ENCODE measurements at regions of chr17 and their contacts with region 1.

Region 1: DNA sequence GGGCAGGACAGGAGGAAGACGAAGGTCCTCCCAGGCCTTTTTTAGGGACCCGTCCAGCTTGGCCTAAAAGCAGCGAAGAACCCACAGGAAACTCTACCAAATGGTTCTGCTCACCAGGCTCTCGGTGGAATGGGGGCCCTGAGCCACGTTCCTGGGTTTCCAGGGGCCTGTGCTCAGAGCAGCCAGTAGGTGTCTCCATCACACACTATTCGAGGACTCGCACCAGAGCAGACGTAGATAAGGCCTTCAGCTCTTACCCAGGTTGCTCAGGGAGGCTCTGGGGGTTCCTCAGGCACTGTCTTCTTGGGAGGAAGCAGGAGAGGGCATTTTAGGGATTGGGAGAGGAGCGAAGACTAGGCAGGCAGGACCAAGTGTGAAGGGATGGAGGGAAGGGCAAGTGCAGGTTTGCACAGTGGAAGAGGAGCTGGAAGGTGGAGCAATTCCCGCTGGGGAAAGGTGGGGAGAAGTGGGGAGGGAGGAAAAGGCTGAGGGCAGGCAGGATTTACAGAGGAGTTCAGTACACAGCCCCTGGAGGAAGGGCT is 157.1 kb downstream of the RGS9 start:
- DNase-seq: peak; percentile 78
- ATAC-seq: peak; percentile 98
- H3K4me3 Mint-ChIP-seq: no peak overlapping the region
- H3K27ac Mint-ChIP-seq: no peak overlapping the region
- H3K4me1 Mint-ChIP-seq: peaks cover 30% of the 10 kb centered on the region
- H3K27me3 Mint-ChIP-seq: peaks cover 8% of the 10 kb centered on the region
- CTCF ChIP-seq: no peak

Region 2: GRCh38 chr17:65231662-65232335 is 62.5 kb before region 1 on chr17:
- CTCF ChIA-PET with region 1: interaction called, 14 read pairs
- POLR2A ChIA-PET with region 1: no interaction called
- DNase-seq: peak; percentile 73
- ATAC-seq: peak; percentile 95
- H3K4me3 Mint-ChIP-seq: no peak overlapping the region
- H3K27ac Mint-ChIP-seq: no peak overlapping the region
- H3K4me1 Mint-ChIP-seq: peaks cover 11% of the 10 kb centered on the region
- H3K27me3 Mint-ChIP-seq: peaks cover 1% of the 10 kb centered on the region; the same call in 1 of the 2 replicates
- CTCF ChIP-seq: peak; percentile 60

Region 3: DNA sequence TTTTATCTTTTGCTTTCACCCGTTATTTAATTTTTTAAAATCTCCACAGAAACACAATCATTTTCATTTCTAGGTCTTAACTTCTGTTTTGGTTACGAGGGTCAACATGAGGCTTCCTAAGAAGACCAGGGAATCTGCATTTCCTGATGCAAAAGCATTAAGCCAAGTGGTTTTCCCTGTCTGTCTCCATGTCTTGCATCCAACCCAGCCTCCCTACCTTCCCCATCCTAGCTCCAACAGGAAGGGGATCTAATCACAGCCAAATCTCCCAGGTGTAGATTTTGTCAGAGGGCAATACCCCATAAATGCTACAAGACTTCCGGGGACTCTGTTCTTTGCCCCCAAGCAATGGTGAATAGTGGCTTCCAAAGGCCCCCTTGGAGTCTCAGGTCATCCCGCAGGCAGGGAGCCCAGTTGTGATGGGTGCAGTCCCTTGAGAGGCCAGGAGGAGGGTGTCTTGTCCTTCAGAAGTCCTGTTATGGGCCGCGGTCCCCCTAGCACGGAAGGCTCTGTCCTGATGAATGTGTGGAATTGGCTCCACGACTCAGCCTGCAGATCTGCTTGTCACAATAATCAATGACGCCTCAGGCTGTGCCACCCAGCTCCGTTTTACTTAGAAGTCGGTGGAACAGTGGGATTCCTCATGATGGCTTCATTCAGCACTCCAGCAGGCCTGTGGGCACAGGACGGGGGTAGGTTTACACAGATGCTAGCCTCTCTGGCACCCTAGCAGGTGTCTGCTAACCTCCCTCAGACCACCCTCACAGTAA is 16.0 kb before region 1 on chr17:
- CTCF ChIA-PET with region 1: interaction called, 13 read pairs
- POLR2A ChIA-PET with region 1: no interaction called
- DNase-seq: peak; percentile 83
- ATAC-seq: peak; percentile 99
- H3K4me3 Mint-ChIP-seq: no peak overlapping the region
- H3K27ac Mint-ChIP-seq: no peak overlapping the region
- H3K4me1 Mint-ChIP-seq: peaks cover 16% of the 10 kb centered on the region
- H3K27me3 Mint-ChIP-seq: no peaks in the 10 kb centered on the region
- CTCF ChIP-seq: peak; percentile 62; the same call in 1 of the 2 replicates

Region 4: DNA sequence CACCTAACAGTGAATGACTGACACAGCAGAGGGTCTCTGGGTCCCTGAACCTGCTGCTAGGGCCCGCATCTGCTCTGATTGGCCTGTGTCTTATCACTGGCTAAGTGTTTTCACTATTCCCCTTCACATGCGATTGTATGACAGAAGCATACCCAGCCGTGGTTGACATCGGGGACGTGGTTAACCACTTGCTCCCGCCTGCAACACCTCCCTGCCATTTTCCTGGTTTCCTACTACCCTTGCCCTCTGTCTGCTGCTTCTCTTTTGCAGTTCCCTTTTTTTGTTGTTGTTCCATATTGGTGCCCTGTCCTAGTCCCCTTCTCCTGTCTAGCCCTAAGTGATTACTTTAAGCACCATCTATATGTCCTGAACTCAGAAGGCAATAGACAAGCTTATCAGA is 20.0 kb after region 1 on chr17:
- CTCF ChIA-PET with region 1: interaction called, 27 read pairs
- POLR2A ChIA-PET with region 1: interaction called, 3 read pairs
- DNase-seq: no peak
- ATAC-seq: no peak
- H3K4me3 Mint-ChIP-seq: no peak overlapping the region
- H3K27ac Mint-ChIP-seq: no peak overlapping the region
- H3K4me1 Mint-ChIP-seq: peaks cover 16% of the 10 kb centered on the region
- H3K27me3 Mint-ChIP-seq: no peaks in the 10 kb centered on the region
- CTCF ChIP-seq: no peak

Region 5: DNA sequence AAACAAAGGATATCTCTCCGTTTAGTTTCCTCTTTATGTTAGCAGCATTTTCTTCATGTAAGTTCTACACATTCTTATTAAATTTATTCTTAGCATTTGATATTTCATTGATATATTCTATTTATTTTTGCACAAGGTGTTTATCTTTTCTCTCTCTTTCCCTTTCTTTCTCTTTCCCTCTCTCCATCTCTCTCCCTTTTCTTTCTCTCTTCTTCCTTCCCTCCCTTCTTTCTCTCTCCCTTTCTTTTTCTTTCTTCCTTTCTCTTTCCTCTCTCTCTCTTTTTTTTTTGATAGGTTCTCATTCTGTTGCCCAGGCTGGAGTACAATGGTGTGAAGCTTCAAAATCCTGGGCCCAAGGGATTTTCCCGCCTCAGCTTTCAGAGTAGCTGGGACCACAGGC is 90.8 kb after region 1 on chr17:
- CTCF ChIA-PET with region 1: no interaction called
- POLR2A ChIA-PET with region 1: no interaction called
- DNase-seq: no peak
- ATAC-seq: no peak
- H3K4me3 Mint-ChIP-seq: no peak overlapping the region
- H3K27ac Mint-ChIP-seq: no peak overlapping the region
- H3K4me1 Mint-ChIP-seq: no peaks in the 10 kb centered on the region; the same call in 1 of the 2 replicates
- H3K27me3 Mint-ChIP-seq: no peaks in the 10 kb centered on the region; the same call in 1 of the 2 replicates
- CTCF ChIP-seq: no peak

Region 6: DNA sequence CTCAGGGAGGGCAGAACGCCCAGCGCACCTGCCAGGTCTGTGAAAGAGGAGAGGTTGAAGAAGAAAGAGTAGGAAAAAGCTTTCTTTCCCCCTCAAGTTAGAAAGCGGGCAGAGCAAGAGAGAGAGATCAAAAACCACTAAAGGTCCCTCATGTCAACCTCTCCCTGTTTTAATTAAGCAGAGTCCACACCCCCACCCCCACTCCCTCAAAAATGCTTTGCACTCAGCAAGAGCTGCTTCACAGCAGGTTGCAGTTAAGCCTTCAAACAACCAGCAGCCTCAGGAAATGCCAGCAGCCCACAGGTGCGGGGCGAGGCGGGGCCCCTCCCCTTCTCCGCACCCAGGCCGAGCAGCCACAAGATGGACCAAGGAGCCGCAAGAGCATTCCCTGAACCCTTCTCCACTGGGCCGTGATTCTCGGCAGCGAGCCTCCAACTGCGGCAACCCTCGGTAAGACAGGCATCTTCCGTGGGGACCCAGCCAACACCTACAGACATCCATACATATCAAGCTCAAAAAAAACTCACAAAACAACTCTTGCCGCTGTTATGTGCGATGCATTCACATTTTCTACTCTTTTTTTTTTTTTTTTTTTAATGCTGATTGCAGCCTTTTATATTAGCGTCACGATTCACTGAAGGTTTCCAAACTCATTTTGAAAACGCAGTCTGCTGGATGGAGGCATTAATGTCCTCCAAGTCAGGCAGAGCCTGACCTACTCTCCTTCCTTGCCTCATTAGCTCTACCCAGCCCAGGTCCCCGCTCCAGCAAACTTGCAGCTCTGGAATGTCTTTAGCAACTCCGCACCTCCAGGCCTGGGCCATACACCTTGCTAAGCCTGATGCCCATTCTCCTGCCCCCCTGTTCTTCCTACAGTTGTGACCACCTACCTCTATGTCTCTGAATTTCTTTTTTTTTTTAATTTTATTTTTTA is 201.1 kb after region 1 on chr17:
- CTCF ChIA-PET with region 1: interaction called, 10 read pairs
- POLR2A ChIA-PET with region 1: no interaction called
- DNase-seq: peak; percentile 80
- ATAC-seq: peak; percentile 93
- H3K4me3 Mint-ChIP-seq: peak overlapping the region; percentile 59
- H3K27ac Mint-ChIP-seq: peak overlapping the region; percentile 95
- H3K4me1 Mint-ChIP-seq: peaks cover 53% of the 10 kb centered on the region
- H3K27me3 Mint-ChIP-seq: no peaks in the 10 kb centered on the region; the same call in 1 of the 2 replicates
- CTCF ChIP-seq: no peak

Region 7: DNA sequence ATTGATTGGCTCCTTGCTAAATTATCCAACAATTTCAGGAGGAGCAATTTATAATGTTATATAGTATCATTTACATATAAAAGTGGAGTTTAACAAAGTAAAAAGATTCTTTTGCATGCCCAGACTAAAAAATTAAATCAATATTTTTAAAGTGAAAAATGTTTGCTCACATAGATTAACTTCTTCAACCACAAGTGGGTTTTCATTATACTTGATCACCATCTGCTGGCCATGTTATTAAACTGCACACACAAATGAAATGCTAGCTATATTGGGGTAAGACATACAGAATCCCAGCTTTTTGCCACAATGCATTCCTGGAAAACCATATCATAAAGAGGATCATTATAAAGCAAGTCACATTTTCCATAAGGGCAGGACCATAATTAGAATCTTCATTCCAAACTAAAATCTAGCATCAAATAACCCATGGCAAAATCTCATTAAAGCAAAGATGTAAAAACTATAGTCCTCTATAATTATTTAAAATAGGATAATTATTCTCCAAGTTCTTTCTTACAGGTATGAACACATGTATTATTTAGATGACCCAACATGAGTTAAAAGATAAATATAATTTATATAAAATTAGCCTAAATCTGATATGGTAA is 871.4 kb after region 1 on chr17:
- CTCF ChIA-PET with region 1: interaction called, 16 read pairs
- POLR2A ChIA-PET with region 1: no interaction called
- DNase-seq: no peak
- ATAC-seq: 0 out of 2 replicates have a peak, but pooled peaks have one; percentile 28
- H3K4me3 Mint-ChIP-seq: no peak overlapping the region
- H3K27ac Mint-ChIP-seq: no peak overlapping the region
- H3K4me1 Mint-ChIP-seq: no peaks in the 10 kb centered on the region
- H3K27me3 Mint-ChIP-seq: no peaks in the 10 kb centered on the region; the same call in 1 of the 2 replicates
- CTCF ChIP-seq: peak; percentile 55

Measured in WTC11 (cell line).